Left cardiac atrium (tissue), 4 donors: ENCODE measurements at regions of chr17 and their contacts with region 1.

Region 1: DNA sequence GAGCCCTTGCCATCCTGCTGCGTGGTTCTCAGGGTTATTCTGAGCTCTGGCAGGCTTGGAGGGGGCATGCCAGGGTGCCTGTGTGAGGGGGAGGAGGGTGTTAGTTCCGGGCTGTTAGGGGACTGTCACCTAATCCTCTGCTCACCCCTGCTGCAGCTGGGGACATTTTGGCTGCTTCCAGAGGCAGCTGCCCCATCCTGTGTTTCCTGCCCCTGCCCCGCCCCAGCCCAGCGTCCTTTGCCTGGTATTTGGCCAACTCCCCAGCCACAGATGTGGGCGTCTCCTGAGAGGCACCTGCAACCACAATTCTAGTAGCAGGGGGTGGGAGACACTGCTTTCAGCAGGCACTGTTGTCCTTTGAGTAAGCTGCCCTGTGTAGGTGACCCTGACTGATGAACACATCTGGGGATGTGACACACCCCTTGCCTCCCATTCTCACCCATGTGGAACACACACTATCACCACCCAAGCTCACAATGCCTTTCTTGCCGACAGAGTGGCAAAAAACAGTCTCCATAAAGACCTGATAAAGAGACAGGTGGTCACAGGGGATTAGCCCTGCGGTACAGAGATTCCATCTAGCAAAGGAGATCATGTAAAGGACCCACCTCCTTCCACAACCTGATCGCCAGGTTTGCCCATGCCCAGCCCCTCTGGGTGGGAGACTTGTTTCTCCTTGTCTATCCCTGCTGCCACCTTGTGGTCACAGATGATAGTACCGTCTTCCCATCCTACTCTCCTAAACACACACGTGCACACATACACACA is at the start of gene CHRNE:
- DNase-seq: peak; percentile 78
- ATAC-seq: peak; percentile 18 to 70
- total RNA-seq, gene CHRNE: 36.8 to 118 TPM

Region 2: DNA sequence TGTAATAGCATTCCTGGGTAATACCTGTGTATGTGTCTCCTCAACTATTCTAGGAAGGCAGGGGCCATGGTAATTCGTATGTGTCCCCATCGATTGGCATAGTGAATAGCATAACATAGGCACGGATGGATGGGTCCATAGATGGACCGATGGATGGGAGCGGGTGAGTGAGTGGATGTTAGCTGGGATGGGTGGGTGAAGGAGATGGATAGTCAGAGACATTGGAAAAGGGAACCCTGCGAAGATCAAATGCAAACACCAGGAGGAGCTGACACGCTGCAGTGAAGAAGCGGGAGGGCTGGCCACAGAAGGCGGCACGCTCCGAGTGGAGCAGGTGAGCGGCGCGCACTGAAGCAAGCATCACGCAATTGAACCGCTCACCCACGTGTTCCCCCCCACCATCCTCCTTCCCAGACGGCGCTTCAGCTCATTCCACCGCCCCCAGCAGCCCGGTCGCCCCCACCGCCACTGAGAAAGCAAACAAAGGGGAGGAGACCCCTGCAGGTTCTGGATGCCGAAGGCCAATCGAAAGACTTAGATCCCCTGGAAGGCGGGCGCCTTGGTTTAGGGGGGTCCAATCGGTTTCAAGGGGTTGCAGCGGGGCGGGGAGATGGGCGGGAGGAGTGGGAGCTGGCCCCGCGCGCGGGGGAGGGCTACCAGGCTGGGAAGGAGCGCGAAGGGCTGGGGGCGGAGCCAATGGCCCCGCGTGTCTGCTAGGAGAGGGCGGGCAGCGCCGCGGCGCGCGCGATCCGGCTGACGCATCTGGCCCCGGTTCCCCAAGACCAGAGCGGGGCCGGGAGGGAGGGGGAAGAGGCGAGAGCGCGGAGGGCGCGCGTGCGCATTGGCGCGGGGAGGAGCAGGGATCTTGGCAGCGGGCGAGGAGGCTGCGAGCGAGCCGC is 193.2 kb before region 1 on chr17 and contains the start of gene ARRB2:
- intact Hi-C with region 1: loop called in 1 of 2 experiments (anchors 5 kb)
- DNase-seq: peak; percentile 99
- ATAC-seq: peak; percentile 94 to 95
- total RNA-seq, gene ARRB2: 30.7 to 43.5 TPM

Region 3: GRCh38 chr17:4986951-4987766 is 83.9 kb after region 1 on chr17 and contains the start of gene CAMTA2:
- intact Hi-C with region 1: loop called (anchors 5 to 10 kb)
- DNase-seq: peak; percentile 96
- ATAC-seq: peak; percentile 96 to 97
- total RNA-seq, gene CAMTA2: 35.5 to 46.1 TPM